Ascending aorta (tissue), 2 donors: ENCODE measurements at regions of chr3 and their contacts with region 1.

Region 1: GRCh38 chr3:196867507-196868296 is at the start of gene SENP5:
- DNase-seq: peak; percentile 45 to 93
- H3K4me3 ChIP-seq: peak within 1 kb of the TSS; percentile 57 to 89
- H3K27ac ChIP-seq: peak within 1 kb of the TSS; percentile 95 to 96
- H3K4me1 ChIP-seq: peaks cover 9 to 12% of the 10 kb centered on the region in 2 donors
- H3K27me3 ChIP-seq: no peaks in the 10 kb centered on the region
- CTCF ChIP-seq: no peak
- total RNA-seq, gene SENP5: 11.0 TPM

Region 2: GRCh38 chr3:196711838-196712513 is 155.7 kb before region 1 on chr3 and contains the starts of genes CEP19 and PIGX:
- intact Hi-C with region 1: loop called (anchors 1 kb)
- DNase-seq: peak; percentile 27 to 90
- H3K4me3 ChIP-seq: peak within 1 kb of the TSS; percentile 85 to 87
- H3K27ac ChIP-seq: peak within 1 kb of the TSS; percentile 86 to 91
- H3K4me1 ChIP-seq: peaks cover 0 to 8% of the 10 kb centered on the region in 2 donors
- H3K27me3 ChIP-seq: no peaks in the 10 kb centered on the region
- CTCF ChIP-seq: no peak
- total RNA-seq, gene CEP19: 2.6 TPM
- total RNA-seq, gene PIGX: 47.7 TPM

Region 3: DNA sequence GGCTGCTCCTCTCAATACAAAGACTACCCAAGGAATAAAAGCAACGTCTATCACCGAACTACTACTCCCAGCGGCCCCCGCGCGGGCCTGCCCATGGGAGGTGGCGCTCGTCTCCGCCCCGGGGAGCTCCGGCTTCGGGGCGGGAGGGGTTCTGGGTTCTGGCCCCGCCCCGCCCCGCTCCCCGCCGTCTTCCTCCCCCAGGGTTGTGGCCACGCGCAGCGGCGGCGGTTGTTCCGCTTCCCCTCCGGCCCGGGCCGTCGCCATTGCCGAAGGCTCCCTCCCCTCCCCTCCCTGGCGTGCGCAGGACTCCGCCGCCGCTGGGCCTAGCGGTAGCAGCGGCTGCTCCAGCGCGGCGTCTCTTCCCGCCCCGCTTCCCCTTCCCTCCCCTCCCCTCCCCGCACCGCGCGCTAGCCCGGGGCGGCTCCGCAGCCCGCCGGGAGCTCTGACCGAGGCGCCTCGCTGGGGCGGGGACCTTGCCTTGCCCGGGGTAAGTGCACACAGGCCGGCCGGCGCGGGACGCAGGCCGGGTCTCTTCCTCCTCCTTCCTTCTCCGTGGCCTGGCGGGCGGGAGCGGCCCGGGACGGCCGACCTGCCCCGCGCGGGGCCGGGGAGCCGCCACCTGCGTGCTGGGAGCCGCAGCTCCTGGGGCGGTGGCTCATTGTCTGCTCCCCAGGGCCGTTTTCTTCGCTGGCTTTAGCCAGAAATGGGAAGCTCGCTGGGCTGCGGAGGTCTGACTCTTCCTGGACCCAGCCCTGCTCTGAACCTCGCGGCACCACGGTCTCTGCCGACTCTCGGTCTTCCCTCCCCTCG is 127.8 kb before region 1 on chr3 and contains the start of gene PAK2:
- intact Hi-C with region 1: loop called (anchors 1 kb)
- DNase-seq: peak; percentile 70 to 95
- H3K4me3 ChIP-seq: peak within 1 kb of the TSS; percentile 80 to 92
- H3K27ac ChIP-seq: peak within 1 kb of the TSS; percentile 98 to 99
- H3K4me1 ChIP-seq: peaks cover 4 to 12% of the 10 kb centered on the region in 2 donors
- H3K27me3 ChIP-seq: no peaks in the 10 kb centered on the region
- CTCF ChIP-seq: no peak
- total RNA-seq, gene PAK2: 24.4 TPM